CD8-positive, alpha-beta T cell (primary cell): ENCODE measurements at regions of chr2 and their contacts with region 1.

Region 1: DNA sequence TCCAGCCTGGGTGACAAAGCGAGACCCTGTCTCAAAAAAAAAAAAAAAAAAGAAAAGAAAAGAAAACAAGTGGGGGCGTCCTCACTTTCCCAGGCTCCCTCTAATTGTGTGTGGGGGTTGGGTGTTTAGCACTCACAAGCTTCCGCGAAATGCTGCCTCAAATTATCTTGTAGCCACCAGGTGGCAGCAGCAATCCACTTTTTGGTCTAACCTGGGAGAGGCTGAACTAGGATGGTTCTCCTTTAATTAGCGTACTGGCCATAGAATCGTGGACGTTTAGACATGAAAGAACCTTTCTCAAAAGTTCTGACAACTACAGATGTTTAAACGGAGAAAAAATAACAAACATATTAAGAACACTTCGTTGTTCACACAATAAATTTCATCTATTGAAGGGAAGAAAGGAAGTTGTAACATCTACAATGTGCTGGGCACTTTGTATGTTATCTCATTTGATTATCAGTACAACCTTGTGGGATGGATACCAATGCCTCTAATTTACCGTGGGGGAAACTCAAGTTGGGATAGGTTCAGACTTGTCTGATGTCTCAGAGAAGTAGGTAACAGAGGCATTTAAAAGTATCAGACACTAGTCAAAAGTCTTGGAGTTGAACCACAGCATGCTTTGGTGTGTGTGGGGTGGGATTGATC is 122.7 kb upstream of the NABP1 start:
- DNase-seq: peak; percentile 62 to 85 (median 80)
- ATAC-seq: peak; percentile 75
- H3K4me3 ChIP-seq: no peak overlapping the region
- H3K4me3 Mint-ChIP-seq: no peak overlapping the region
- H3K27ac ChIP-seq: no peak overlapping the region
- H3K27ac Mint-ChIP-seq: no peak overlapping the region
- H3K4me1 ChIP-seq: no peaks in the 10 kb centered on the region
- H3K4me1 Mint-ChIP-seq: peaks cover 4% of the 10 kb centered on the region
- H3K27me3 ChIP-seq: no peaks in the 10 kb centered on the region
- H3K27me3 Mint-ChIP-seq: peaks cover 15% of the 10 kb centered on the region
- CTCF ChIP-seq: peak; percentile 87

Region 2: DNA sequence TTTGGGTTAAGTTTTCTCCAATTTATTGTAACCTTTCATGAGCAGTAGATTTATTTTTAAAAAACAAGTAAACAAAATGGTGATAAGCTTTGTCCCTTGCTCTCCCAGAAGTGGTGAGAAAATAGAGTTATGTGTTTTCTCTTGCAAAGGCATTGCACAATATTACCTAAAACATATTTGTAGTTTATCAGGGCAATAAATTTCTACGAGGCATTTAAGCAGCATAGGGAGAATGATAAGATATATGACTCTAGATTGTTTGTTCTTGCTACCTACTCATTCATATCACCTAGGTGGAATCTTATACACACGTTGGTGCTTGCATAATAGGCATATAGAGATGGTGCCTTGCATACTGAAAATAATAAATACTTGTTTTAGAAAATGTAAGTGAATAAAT is 108.3 kb before region 1 on chr2:
- CTCF ChIA-PET with region 1: no interaction called
- POLR2A ChIA-PET with region 1: no interaction called
- intact Hi-C with region 1: no loop called
- DNase-seq: no peak
- ATAC-seq: no peak
- H3K4me3 ChIP-seq: no peak overlapping the region
- H3K4me3 Mint-ChIP-seq: no peak overlapping the region
- H3K27ac ChIP-seq: no peak overlapping the region
- H3K27ac Mint-ChIP-seq: no peak overlapping the region
- H3K4me1 ChIP-seq: no peaks in the 10 kb centered on the region
- H3K4me1 Mint-ChIP-seq: no peaks in the 10 kb centered on the region
- H3K27me3 ChIP-seq: peaks cover 0 to 4% of the 10 kb centered on the region in 2 experiments
- H3K27me3 Mint-ChIP-seq: peaks cover 6% of the 10 kb centered on the region
- CTCF ChIP-seq: no peak

Region 3: DNA sequence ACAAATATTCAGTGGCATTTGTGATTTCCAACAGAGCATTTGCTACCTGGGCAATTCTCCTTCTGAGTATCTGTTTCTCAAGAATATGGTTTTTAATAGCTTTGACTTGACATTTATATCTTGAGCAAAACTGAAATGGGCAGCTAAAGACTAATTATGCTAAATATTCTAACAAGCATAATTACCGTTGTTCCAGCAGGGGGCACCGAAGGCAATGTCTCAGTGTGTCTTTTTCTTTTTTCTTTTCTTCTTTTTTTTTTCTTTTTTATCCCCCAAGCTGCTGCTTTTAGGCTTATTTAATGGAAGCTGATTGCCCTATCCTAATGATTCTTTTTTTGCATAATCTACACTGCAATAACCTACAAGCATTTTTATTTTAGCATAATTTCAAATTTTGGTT is 16.1 kb before region 1 on chr2:
- CTCF ChIA-PET with region 1: interaction called, 16 read pairs
- POLR2A ChIA-PET with region 1: no interaction called
- intact Hi-C with region 1: no loop called
- DNase-seq: peak in 4 of 9 experiments; percentile 12 to 43 (median 30)
- ATAC-seq: no peak
- H3K4me3 ChIP-seq: no peak overlapping the region
- H3K4me3 Mint-ChIP-seq: no peak overlapping the region
- H3K27ac ChIP-seq: no peak overlapping the region
- H3K27ac Mint-ChIP-seq: no peak overlapping the region
- H3K4me1 ChIP-seq: no peaks in the 10 kb centered on the region
- H3K4me1 Mint-ChIP-seq: no peaks in the 10 kb centered on the region
- H3K27me3 ChIP-seq: no peaks in the 10 kb centered on the region
- H3K27me3 Mint-ChIP-seq: peaks cover 2% of the 10 kb centered on the region
- CTCF ChIP-seq: peak; percentile 39

Region 4: DNA sequence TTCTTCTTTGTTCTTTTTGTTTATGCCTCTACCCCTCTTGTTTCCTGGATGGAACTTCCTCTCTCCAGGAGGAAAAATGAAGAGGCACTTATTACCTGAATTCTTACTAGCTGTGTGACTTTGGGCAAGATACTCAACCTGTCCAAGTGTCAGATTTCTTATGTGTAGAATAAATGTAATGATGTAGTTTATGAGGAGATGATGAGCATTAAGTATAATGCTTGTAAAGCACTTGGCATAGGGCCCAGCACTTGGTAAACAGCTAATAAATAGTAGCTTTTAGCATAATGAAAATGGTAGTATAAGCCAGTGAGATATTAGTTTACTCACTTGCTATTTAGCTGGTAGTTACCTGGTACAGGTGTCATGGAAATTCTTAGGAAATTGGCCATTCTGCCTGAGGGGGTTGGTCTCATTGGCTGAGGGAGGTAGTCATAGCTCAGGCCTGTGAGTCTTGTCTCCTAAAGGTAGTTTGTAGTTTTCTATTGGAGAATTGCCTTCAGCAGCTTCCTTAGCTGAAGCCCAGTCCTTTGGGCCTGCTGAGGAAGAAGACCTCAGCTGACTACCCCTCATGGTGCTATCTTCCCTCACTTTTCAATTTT is 10.7 kb before region 1 on chr2:
- CTCF ChIA-PET with region 1: interaction called, 16 read pairs
- POLR2A ChIA-PET with region 1: no interaction called
- intact Hi-C with region 1: no loop called
- DNase-seq: no peak
- ATAC-seq: no peak
- H3K4me3 ChIP-seq: no peak overlapping the region
- H3K4me3 Mint-ChIP-seq: no peak overlapping the region
- H3K27ac ChIP-seq: no peak overlapping the region
- H3K27ac Mint-ChIP-seq: no peak overlapping the region
- H3K4me1 ChIP-seq: no peaks in the 10 kb centered on the region
- H3K4me1 Mint-ChIP-seq: no peaks in the 10 kb centered on the region
- H3K27me3 ChIP-seq: no peaks in the 10 kb centered on the region
- H3K27me3 Mint-ChIP-seq: peaks cover 2% of the 10 kb centered on the region
- CTCF ChIP-seq: no peak

Region 5: DNA sequence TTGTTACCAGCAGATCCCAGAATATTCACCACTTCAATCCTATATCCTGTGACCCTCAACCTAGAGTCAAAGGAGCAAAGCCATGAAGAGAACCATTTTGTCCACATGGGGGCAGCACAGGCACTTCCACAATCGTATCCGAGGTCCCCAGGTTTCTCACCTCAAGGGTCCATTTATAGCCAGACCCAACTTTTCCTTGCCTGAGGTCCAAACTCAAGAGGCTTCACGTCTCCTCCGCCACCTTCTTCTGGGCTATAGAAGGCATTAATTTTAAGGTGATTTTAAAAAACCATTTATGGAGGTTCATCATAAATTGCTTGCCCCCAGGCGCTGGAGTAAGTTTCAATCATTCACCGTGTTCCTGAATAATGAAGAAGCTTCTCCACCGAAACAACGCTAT is 11.1 kb after region 1 on chr2:
- CTCF ChIA-PET with region 1: interaction called, 32 read pairs
- POLR2A ChIA-PET with region 1: no interaction called
- intact Hi-C with region 1: no loop called
- DNase-seq: peak; percentile 33 to 81 (median 72)
- ATAC-seq: peak; percentile 55
- H3K4me3 ChIP-seq: no peak overlapping the region
- H3K4me3 Mint-ChIP-seq: no peak overlapping the region
- H3K27ac ChIP-seq: no peak overlapping the region
- H3K27ac Mint-ChIP-seq: no peak overlapping the region
- H3K4me1 ChIP-seq: peaks cover 11% of the 10 kb centered on the region
- H3K4me1 Mint-ChIP-seq: peaks cover 18% of the 10 kb centered on the region
- H3K27me3 ChIP-seq: peaks cover 0 to 12% of the 10 kb centered on the region in 2 experiments
- H3K27me3 Mint-ChIP-seq: peaks cover 29% of the 10 kb centered on the region
- CTCF ChIP-seq: peak; percentile 80

Region 6: DNA sequence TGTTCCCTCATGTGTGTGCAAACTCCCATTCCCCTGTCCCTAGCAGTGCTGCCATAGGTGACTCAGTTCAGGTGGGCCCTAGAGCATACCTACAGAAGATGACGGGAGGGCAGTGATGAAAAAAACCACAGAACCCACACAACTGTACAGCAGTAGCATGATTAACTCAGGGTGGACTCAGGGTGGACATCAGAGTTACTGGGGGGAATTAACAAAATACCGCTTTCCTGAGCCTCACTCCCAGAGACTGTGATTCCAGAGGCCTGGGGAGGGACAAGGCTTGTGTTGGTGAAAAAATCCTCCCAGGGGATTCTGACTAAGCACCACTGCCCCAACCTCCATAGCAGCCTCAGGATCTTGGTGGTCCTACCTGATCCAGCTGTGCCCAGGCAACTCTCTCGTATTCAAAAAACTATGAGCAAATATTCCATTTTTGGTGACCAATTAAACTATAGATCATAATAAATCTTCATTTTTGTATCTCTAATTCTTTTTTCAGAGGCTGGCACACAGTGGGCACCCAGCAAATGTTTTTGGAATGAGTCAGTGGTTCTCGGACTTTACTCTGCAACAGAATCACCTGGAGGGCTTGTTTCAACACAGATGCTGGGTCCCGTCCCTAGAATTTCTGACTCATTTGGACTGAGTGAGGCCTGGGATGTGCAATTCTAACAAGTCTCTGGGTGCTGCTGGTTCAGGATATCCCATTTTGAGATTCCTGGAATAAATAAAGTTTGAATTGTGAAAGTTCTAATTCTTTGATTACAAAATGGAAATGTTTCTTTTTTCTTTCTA is 38.6 kb after region 1 on chr2:
- CTCF ChIA-PET with region 1: no interaction called
- POLR2A ChIA-PET with region 1: no interaction called
- intact Hi-C with region 1: no loop called
- DNase-seq: no peak
- ATAC-seq: no peak
- H3K4me3 ChIP-seq: no peak overlapping the region
- H3K4me3 Mint-ChIP-seq: no peak overlapping the region
- H3K27ac ChIP-seq: no peak overlapping the region
- H3K27ac Mint-ChIP-seq: no peak overlapping the region
- H3K4me1 ChIP-seq: no peaks in the 10 kb centered on the region
- H3K4me1 Mint-ChIP-seq: no peaks in the 10 kb centered on the region
- H3K27me3 ChIP-seq: no peaks in the 10 kb centered on the region
- H3K27me3 Mint-ChIP-seq: no peaks in the 10 kb centered on the region
- CTCF ChIP-seq: no peak